ENCODE measurements at regions of chr3 and their contacts with region 1.

Region 1: GRCh38 chr3:52056968-52057805 is 816 bp upstream of the DUSP7 start:
- DNase-seq: peak; percentile 99
- H3K4me3 ChIP-seq: peak overlapping the region; percentile 82
- H3K27ac ChIP-seq: peak overlapping the region; percentile 42
- H3K4me1 ChIP-seq: peaks cover 41% of the 10 kb centered on the region
- CTCF ChIP-seq: no peak

Region 2: DNA sequence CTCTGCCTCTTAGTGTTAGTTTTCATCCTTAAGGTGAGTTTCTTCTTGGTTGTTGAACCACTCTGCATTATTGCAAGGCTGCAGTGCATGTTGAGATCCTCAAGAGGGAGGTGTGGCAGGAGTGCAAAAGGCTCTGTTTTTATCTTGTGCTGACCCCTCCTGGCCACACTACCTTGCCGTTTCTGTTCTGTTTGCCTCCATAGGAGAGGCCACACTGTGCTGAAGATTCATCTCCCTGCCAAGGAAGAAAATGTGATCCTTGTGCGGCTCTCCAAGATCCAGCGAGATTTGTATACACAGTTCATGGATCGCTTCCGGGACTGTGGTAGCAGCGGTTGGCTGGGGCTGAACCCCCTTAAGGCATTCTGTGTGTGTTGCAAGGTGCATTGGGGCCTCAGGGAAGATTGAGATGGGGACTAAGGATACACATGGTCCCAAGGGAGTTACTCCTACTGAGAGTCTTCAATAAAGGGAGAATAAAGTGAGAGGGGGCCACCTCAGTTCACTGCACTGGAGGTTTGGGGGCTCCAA is 419.2 kb before region 1 on chr3:
- CTCF ChIA-PET with region 1: no interaction called
- POLR2A ChIA-PET with region 1: no interaction called
- intact Hi-C with region 1: no loop called
- DNase-seq: peak; percentile 72
- H3K4me3 ChIP-seq: no peak overlapping the region
- H3K27ac ChIP-seq: no peak overlapping the region
- H3K4me1 ChIP-seq: no peaks in the 10 kb centered on the region
- CTCF ChIP-seq: peak; percentile 92

Region 3: DNA sequence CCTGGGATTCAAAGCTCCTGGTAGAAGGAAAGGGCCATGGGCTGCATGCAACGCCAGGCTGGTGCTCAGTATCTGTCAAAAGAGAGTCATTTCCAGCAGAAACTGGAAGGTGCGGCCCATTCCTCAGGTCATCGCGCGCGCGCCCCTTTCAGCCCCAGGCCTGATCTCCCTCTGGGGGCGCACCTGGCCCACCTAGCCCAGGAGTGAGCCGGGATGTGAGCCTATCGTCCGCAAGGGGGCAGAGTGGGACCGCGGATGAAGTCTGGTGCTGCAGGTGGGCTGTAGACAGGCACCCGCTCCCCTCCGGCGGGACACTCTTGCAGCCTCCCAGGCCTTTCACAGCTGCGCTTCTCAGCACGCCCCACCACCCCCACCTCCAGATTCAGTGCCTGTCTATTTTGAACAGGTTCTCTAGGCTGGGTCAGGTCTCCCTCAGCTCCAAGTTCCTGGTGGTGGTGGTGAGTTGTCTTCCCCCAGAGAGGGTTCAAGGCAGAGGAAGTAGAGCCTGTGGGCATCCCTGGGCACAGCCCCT is 55.7 kb before region 1 on chr3:
- CTCF ChIA-PET with region 1: no interaction called
- POLR2A ChIA-PET with region 1: interaction called, 4 read pairs
- intact Hi-C with region 1: loop called (anchors 1 kb)
- DNase-seq: peak; percentile 90
- H3K4me3 ChIP-seq: no peak overlapping the region
- H3K27ac ChIP-seq: no peak overlapping the region
- H3K4me1 ChIP-seq: peaks cover 15% of the 10 kb centered on the region
- CTCF ChIP-seq: peak; percentile 99

Region 4: GRCh38 chr3:52046186-52046913 is 10.8 kb before region 1 on chr3:
- CTCF ChIA-PET with region 1: no interaction called
- POLR2A ChIA-PET with region 1: no interaction called
- intact Hi-C with region 1: no loop called
- DNase-seq: no peak
- H3K4me3 ChIP-seq: no peak overlapping the region
- H3K27ac ChIP-seq: no peak overlapping the region
- H3K4me1 ChIP-seq: no peaks in the 10 kb centered on the region
- CTCF ChIP-seq: no peak

Region 5: GRCh38 chr3:52123106-52123725 is 66.0 kb after region 1 on chr3:
- CTCF ChIA-PET with region 1: no interaction called
- POLR2A ChIA-PET with region 1: no interaction called
- intact Hi-C with region 1: loop called (anchors 1 kb)
- DNase-seq: peak; percentile 63
- H3K4me3 ChIP-seq: no peak overlapping the region
- H3K27ac ChIP-seq: no peak overlapping the region
- H3K4me1 ChIP-seq: peaks cover 22% of the 10 kb centered on the region
- CTCF ChIP-seq: peak; percentile 93

Region 6: DNA sequence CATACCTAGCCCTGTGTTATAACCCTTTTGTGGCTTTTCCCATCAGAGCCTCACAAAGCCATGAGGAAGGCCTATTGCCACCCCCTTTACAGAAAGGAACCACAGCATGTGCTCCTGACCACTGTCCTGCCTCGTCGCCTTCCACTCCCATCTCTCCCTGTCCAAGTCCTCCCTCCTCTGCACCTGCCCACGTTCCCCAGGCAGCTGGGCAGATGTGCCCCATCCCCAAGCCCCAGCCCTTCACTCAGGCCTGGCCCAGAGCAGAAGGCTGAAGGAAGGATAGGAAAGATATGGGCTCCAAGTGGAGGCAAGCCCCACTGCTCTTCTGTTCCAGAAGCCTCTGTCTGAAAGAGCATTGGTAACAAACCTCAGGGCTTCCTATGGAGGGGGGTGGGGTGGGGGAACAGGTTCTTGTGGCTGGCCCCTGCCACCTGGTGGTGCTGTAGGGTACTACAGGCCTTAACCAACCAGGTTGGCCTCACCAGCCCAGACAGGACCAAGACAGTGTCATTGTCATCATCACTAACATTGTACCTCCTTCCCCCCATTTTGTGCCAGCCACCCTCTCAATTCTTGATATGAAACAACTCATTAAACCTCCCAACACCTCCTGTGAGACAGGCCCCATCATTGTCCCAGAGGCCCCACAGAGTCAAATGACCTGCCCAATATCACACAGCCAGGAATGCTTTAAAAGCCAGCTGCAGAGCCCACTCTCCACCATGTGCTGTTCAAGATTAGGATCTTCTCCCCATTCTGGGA is 87.0 kb after region 1 on chr3:
- CTCF ChIA-PET with region 1: no interaction called
- POLR2A ChIA-PET with region 1: no interaction called
- intact Hi-C with region 1: loop called (anchors 1 kb)
- DNase-seq: peak; percentile 81
- H3K4me3 ChIP-seq: no peak overlapping the region
- H3K27ac ChIP-seq: no peak overlapping the region
- H3K4me1 ChIP-seq: no peaks in the 10 kb centered on the region
- CTCF ChIP-seq: peak; percentile 94

Region 7: DNA sequence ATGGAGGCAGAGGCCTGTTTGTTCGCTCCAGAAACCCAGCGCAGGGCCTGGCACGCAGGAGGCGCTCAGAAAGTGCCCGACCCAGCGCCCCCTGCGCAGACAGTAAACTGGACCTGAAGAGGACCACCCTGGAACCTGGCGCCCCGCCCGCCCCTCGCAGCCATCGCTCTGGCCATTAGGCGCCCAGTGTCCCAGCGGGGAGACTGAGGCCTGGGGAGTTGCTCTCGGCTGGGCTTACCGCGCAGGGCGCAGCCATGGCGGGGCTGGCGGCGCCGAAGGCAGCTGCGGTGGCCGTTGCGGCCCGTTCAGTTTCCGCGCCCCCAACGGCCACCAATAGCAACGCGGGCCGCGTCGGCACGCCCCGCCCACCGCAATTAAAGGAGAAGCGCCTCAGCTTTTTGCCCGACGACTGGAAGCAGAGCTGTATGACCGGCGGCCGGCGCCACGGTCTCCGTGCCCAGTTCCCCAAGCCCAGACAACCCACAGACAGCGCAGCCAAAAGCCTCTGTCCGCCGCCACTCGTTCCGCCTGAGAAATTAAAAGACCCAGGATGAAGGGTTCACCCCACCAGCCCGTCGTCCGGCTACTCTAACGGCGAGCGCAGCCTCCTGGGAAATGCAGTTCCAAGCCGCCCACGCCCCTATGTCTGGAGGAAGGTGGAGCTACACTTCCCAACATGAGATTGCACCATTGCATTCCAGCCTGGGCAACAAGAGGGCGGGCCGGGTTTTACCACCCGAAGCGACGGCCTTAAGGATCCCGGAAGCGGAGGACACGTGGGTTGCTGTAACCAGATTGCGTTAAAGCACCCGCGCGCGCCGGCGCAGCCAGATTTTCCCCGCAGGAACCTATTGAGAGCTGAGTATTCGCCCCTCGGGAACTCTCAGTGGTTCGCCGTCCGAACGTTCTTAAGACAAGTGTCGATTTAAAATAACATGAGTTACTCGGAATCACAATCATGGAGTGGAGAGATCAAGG is 97.2 kb after region 1 on chr3 and contains the start of gene POC1A:
- CTCF ChIA-PET with region 1: no interaction called
- POLR2A ChIA-PET with region 1: interaction called, 4 read pairs
- intact Hi-C with region 1: loop called (anchors 1 kb)
- DNase-seq: peak; percentile 94
- H3K4me3 ChIP-seq: peak within 1 kb of the TSS; percentile 93
- H3K27ac ChIP-seq: peak within 1 kb of the TSS; percentile 64
- H3K4me1 ChIP-seq: peaks cover 9% of the 10 kb centered on the region
- CTCF ChIP-seq: no peak
- total RNA-seq, gene POC1A: 34.5 and 40.0 TPM in 2 replicates